H1 (cell line): ENCODE measurements at regions of chr9 and their contacts with region 1.

Region 1: GRCh38 chr9:128552153-128552743 is at the start of gene SPTAN1:
- DNase-seq: peak; percentile 75 to 97
- H3K4me3 ChIP-seq: peak within 1 kb of the TSS; percentile 83 to 96 (median 89)
- H3K27ac ChIP-seq: peak within 1 kb of the TSS; percentile 61; the same call in 1 of the 2 replicates
- H3K4me1 ChIP-seq: peaks cover 10 to 17% (median 15%) of the 10 kb centered on the region in 4 experiments
- H3K27me3 ChIP-seq: peaks cover 0 to 3% (median 0%) of the 10 kb centered on the region in 4 experiments; a peak in 3 of 7 replicates
- CTCF ChIP-seq: 0 out of 4 replicates have a peak, but pooled peaks of 1 of the 3 experiments have one; percentile 9
- EP300 ChIP-seq: no peak
- POLR2A ChIP-seq: peak; percentile 97
- RAD21 ChIP-seq: no peak
- total RNA-seq, gene SPTAN1: 209 and 216 TPM in 2 replicates

Region 2: GRCh38 chr9:128540634-128541360 is 11.5 kb before region 1 on chr9:
- CTCF ChIA-PET with region 1: interaction called, 3 read pairs
- POLR2A ChIA-PET with region 1: interaction called, 56 read pairs
- DNase-seq: no peak
- H3K4me3 ChIP-seq: no peak overlapping the region
- H3K27ac ChIP-seq: no peak overlapping the region
- H3K4me1 ChIP-seq: no peaks in the 10 kb centered on the region
- H3K27me3 ChIP-seq: no peaks in the 10 kb centered on the region
- CTCF ChIP-seq: no peak
- EP300 ChIP-seq: no peak
- POLR2A ChIP-seq: no peak
- RAD21 ChIP-seq: no peak

Region 3: DNA sequence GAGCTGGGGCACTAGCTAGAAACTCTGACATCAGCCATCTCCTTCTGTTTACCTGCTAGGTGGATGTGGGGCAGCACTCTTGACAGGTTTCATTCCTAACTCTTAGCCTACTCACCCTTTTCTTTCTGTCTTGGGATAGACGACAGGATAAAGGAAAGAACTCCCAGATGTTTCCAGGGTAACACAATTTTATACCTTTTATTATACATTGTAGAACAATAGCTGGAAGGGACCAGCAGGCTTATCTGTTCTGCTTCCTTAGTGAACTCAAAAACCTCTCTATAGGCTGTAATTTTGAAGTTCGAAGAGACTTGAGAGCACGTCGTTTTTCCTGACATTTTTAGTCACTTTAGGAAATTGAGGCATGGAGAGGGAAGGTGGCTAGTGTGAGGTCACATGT is 13.3 kb after region 1 on chr9:
- CTCF ChIA-PET with region 1: interaction called, 3 read pairs
- POLR2A ChIA-PET with region 1: interaction called, 59 read pairs
- DNase-seq: no peak
- H3K4me3 ChIP-seq: no peak overlapping the region
- H3K27ac ChIP-seq: no peak overlapping the region
- H3K4me1 ChIP-seq: no peaks in the 10 kb centered on the region
- H3K27me3 ChIP-seq: no peaks in the 10 kb centered on the region
- CTCF ChIP-seq: no peak
- EP300 ChIP-seq: no peak
- POLR2A ChIP-seq: no peak
- RAD21 ChIP-seq: no peak